CD8-positive, alpha-beta T cell (primary cell): ENCODE measurements at regions of chr14 and their contacts with region 1.

Region 1: DNA sequence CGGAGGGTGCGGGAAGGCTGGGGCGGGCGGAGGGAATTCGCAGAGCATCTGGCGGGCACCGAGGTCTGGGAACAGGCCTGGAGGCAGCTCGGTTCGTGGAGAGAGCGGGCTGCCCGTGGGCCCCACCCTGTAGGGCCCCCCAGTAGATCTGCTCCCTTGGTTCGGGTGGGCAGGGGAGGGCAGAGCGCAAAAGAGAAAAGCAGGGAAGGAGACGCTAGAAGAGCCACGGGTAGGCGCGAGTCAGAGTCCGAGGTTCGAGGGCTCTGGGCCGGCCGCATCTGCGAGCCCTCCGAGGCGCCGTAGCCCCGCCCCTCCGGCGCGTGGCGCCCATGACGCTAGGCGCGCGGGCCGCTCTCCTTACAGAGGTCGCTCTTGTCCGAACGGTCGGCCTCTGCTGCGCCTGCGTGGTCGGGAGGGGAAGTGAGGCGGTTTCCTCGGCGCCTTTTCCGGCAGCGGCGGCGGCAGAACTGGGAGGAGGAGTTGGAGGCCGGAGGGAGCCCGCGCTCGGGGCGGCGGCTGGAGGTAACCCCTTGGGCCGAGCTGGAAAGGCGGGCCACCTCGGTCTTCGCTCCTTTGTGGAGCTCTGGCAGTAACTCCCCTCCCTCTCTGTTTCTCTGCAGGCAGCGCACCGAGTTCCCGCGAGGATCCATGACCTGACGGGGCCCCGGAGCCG is at the start of gene ARF6:
- DNase-seq: peak; percentile 90 to 98 (median 97)
- ATAC-seq: peak; percentile 76
- H3K4me3 ChIP-seq: peak within 1 kb of the TSS; percentile 87 to 92
- H3K4me3 Mint-ChIP-seq: peak within 1 kb of the TSS; percentile 97
- H3K27ac ChIP-seq: peak within 1 kb of the TSS; percentile 98 to 99
- H3K27ac Mint-ChIP-seq: peak within 1 kb of the TSS; percentile 98
- H3K4me1 ChIP-seq: peaks cover 27% of the 10 kb centered on the region
- H3K4me1 Mint-ChIP-seq: peaks cover 30% of the 10 kb centered on the region
- H3K27me3 ChIP-seq: no peaks in the 10 kb centered on the region
- H3K27me3 Mint-ChIP-seq: no peaks in the 10 kb centered on the region
- CTCF ChIP-seq: no peak
- total RNA-seq, gene ARF6: 60.9 to 62.5 TPM

Region 2: GRCh38 chr14:49879683-49880204 is 13.0 kb before region 1 on chr14:
- CTCF ChIA-PET with region 1: interaction called, 6 read pairs
- POLR2A ChIA-PET with region 1: interaction called, 5 read pairs
- intact Hi-C with region 1: loop called in 1 of 2 experiments (anchors 1 kb)
- DNase-seq: peak in 6 of 9 experiments; percentile 38 to 83 (median 62)
- ATAC-seq: peak; percentile 97
- H3K4me3 ChIP-seq: no peak overlapping the region
- H3K4me3 Mint-ChIP-seq: no peak overlapping the region
- H3K27ac ChIP-seq: no peak overlapping the region
- H3K27ac Mint-ChIP-seq: no peak overlapping the region
- H3K4me1 ChIP-seq: peaks cover 11% of the 10 kb centered on the region
- H3K4me1 Mint-ChIP-seq: peaks cover 12% of the 10 kb centered on the region
- H3K27me3 ChIP-seq: no peaks in the 10 kb centered on the region
- H3K27me3 Mint-ChIP-seq: no peaks in the 10 kb centered on the region
- CTCF ChIP-seq: peak; percentile 47

Region 3: GRCh38 chr14:49971156-49972130 is 78.7 kb after region 1 on chr14:
- CTCF ChIA-PET with region 1: interaction called, 8 read pairs
- POLR2A ChIA-PET with region 1: interaction called, 19 read pairs
- intact Hi-C with region 1: loop called (anchors 1 to 2 kb)
- DNase-seq: peak in 8 of 9 experiments; percentile 31 to 83 (median 61)
- ATAC-seq: peak; percentile 84
- H3K4me3 ChIP-seq: peak overlapping the region; percentile 25 to 31
- H3K4me3 Mint-ChIP-seq: peak overlapping the region; percentile 78
- H3K27ac ChIP-seq: peak overlapping the region; percentile 62 to 87
- H3K27ac Mint-ChIP-seq: peak overlapping the region; percentile 98
- H3K4me1 ChIP-seq: peaks cover 41% of the 10 kb centered on the region
- H3K4me1 Mint-ChIP-seq: peaks cover 60% of the 10 kb centered on the region
- H3K27me3 ChIP-seq: no peaks in the 10 kb centered on the region
- H3K27me3 Mint-ChIP-seq: no peaks in the 10 kb centered on the region
- CTCF ChIP-seq: no peak

Region 4: GRCh38 chr14:50045039-50045711 is 152.4 kb after region 1 on chr14:
- CTCF ChIA-PET with region 1: interaction called, 6 read pairs
- POLR2A ChIA-PET with region 1: interaction called, 5 read pairs
- intact Hi-C with region 1: loop called in 1 of 2 experiments (anchors 5 kb)
- DNase-seq: peak; percentile 27 to 86 (median 72)
- ATAC-seq: peak; percentile 77
- H3K4me3 ChIP-seq: peak overlapping the region in 1 of 2 experiments; percentile 17
- H3K4me3 Mint-ChIP-seq: peak overlapping the region; percentile 56
- H3K27ac ChIP-seq: peak overlapping the region; percentile 63 to 89
- H3K27ac Mint-ChIP-seq: peak overlapping the region; percentile 91
- H3K4me1 ChIP-seq: peaks cover 62% of the 10 kb centered on the region
- H3K4me1 Mint-ChIP-seq: peaks cover 65% of the 10 kb centered on the region
- H3K27me3 ChIP-seq: no peaks in the 10 kb centered on the region
- H3K27me3 Mint-ChIP-seq: no peaks in the 10 kb centered on the region
- CTCF ChIP-seq: no peak

Region 5: DNA sequence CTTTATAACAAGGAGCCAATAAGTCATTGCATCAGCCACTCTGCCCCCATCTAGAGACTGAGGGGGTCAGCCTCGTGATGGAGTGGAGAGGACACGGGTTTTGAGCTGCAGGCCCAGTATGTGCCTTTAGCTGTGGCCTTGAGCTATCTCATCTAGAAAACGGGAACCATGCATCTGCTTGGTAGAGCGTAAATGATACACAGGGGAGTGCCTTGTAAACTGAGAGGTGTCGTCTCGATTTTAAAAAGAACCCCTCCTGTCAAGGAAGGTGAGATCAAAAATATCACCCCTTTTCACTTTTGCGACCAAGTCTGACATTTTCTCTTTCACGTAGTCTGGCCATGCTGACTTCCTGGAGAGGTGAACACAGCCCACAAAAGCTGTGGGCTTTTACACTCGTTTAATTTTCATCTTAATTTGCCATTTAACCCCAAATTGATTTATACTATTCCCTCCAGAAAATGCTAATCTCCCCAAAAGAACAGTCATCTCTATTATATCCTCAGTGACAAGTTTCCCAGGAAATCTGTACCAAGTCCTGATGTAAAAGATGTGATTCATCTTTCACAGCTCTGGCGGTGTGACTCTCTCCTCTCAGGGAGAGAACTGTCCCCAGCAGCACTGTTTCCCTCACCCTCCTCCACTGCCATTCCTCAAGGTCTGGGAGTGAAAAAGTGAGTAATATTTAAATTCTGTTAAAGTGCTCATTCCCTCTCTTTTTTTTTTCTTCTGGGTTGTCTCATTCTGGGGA is 193.0 kb after region 1 on chr14:
- CTCF ChIA-PET with region 1: no interaction called
- POLR2A ChIA-PET with region 1: interaction called, 9 read pairs
- intact Hi-C with region 1: loop called (anchors 1 kb)
- DNase-seq: peak in 3 of 9 experiments; percentile 28 to 81 (median 65)
- ATAC-seq: peak; percentile 2
- H3K4me3 ChIP-seq: peak overlapping the region in 1 of 2 experiments; percentile 16
- H3K4me3 Mint-ChIP-seq: peak overlapping the region; percentile 66
- H3K27ac ChIP-seq: peak overlapping the region; percentile 50 to 98
- H3K27ac Mint-ChIP-seq: peak overlapping the region; percentile 92
- H3K4me1 ChIP-seq: peaks cover 86% of the 10 kb centered on the region
- H3K4me1 Mint-ChIP-seq: peaks cover 94% of the 10 kb centered on the region
- H3K27me3 ChIP-seq: no peaks in the 10 kb centered on the region
- H3K27me3 Mint-ChIP-seq: no peaks in the 10 kb centered on the region
- CTCF ChIP-seq: no peak

Region 6: DNA sequence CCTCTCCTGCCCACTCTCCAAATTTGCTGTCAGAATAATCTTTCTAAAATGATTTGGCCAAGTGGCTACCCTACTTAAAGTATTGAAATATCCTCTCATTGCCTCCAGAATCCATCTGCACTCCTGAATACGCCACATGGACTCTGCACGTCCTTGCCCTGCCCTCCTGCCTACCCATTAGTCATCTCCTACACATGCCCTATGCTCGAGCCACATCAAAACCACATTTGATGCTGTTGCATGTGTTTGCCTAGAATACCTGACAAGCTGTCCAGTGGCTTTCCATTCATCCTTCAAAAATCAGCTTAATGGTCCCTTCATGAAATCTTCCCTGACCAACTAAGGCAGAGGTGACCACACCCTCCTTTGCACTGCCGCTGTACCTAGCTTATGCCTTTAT is 206.6 kb after region 1 on chr14:
- CTCF ChIA-PET with region 1: interaction called, 10 read pairs
- POLR2A ChIA-PET with region 1: interaction called, 11 read pairs
- intact Hi-C with region 1: no loop called
- DNase-seq: no peak
- ATAC-seq: no peak
- H3K4me3 ChIP-seq: no peak overlapping the region
- H3K4me3 Mint-ChIP-seq: no peak overlapping the region
- H3K27ac ChIP-seq: no peak overlapping the region
- H3K27ac Mint-ChIP-seq: peak overlapping the region; percentile 69
- H3K4me1 ChIP-seq: peaks cover 73% of the 10 kb centered on the region
- H3K4me1 Mint-ChIP-seq: peaks cover 71% of the 10 kb centered on the region
- H3K27me3 ChIP-seq: no peaks in the 10 kb centered on the region
- H3K27me3 Mint-ChIP-seq: no peaks in the 10 kb centered on the region
- CTCF ChIP-seq: no peak

Region 7: GRCh38 chr14:50109342-50109741 is 216.6 kb after region 1 on chr14:
- CTCF ChIA-PET with region 1: interaction called, 10 read pairs
- POLR2A ChIA-PET with region 1: interaction called, 11 read pairs
- intact Hi-C with region 1: loop called in 1 of 2 experiments (anchors 1 kb)
- DNase-seq: no peak
- ATAC-seq: no peak
- H3K4me3 ChIP-seq: no peak overlapping the region
- H3K4me3 Mint-ChIP-seq: no peak overlapping the region
- H3K27ac ChIP-seq: no peak overlapping the region
- H3K27ac Mint-ChIP-seq: no peak overlapping the region
- H3K4me1 ChIP-seq: peaks cover 1% of the 10 kb centered on the region
- H3K4me1 Mint-ChIP-seq: peaks cover 20% of the 10 kb centered on the region
- H3K27me3 ChIP-seq: no peaks in the 10 kb centered on the region
- H3K27me3 Mint-ChIP-seq: no peaks in the 10 kb centered on the region
- CTCF ChIP-seq: no peak

Region 8: DNA sequence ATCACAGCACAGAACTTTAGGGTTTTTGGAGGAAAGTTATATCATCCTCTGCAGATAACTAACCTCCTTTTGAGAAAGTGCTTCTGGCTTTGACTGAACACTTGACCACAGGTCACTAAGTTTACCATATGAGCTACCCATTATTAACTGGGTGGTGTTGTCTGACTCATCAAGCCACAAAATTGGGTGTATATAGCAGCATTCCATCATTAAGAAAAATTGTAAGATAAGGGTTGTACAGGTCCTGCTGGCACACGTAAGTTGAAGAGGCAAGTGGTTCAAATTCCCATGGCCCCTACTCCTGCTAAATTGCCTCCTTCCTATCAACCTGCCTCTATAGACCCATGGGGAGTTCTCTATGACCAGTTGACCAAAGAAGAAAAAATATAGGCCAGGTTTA is 379.7 kb after region 1 on chr14:
- CTCF ChIA-PET with region 1: no interaction called
- POLR2A ChIA-PET with region 1: no interaction called
- intact Hi-C with region 1: no loop called
- DNase-seq: no peak
- ATAC-seq: no peak
- H3K4me3 ChIP-seq: no peak overlapping the region
- H3K4me3 Mint-ChIP-seq: no peak overlapping the region
- H3K27ac ChIP-seq: no peak overlapping the region
- H3K27ac Mint-ChIP-seq: no peak overlapping the region
- H3K4me1 ChIP-seq: no peaks in the 10 kb centered on the region
- H3K4me1 Mint-ChIP-seq: no peaks in the 10 kb centered on the region
- H3K27me3 ChIP-seq: no peaks in the 10 kb centered on the region
- H3K27me3 Mint-ChIP-seq: no peaks in the 10 kb centered on the region
- CTCF ChIP-seq: no peak